Activated CD4-positive, alpha-beta T cell treated with anti-CD3 and anti-CD28 coated beads for 36 hours (primary cell): ENCODE measurements at regions of chr13 and their contacts with region 1.

Region 1: DNA sequence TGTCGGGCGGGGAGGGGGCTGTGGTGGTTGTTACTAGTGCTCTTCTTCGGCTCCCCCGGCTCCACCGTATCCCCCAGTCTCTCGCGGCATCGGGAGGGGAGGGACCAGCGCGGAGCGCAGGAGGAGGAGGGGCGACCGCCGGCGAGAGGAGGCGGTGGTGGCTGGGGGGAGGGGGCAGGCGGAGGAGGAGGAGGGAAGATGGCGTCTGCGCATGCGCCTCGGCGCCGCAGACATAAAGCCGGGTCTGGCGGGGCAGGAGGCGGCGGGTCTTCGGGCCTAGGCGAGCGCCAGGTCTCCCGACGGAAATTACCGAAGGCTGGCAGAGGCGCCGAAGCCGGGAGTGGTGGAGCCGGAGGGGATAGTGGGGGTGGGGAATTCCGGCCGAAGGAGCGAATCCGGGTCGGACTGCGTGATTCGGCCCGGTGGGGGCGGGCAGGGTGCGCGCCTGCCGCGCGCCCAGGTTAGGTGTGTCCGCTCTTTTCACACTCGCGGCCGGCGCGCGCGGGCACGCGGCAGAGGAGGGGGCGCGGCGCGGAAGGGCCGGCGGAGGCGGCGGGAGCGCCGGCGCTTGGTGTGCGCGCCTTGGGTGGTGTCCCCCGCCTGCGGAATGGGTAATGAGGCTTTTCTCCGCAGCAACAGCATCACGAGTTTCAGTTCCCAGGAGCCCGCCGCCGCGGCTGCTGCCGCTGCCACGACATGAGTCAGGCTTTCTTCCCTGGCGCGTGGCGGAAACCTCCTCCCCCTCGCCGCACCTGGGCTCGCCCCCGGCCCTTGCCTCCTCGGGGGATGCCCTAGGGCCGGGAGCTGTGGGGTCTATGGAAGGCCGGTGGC is 1.3 kb upstream of the TSC22D1 start:
- DNase-seq: peak; percentile 97
- ATAC-seq: peak; percentile 79
- H3K4me3 Mint-ChIP-seq: peak overlapping the region; percentile 88
- H3K27ac Mint-ChIP-seq: peak overlapping the region; percentile 87
- H3K4me1 Mint-ChIP-seq: peaks cover 38% of the 10 kb centered on the region
- H3K27me3 Mint-ChIP-seq: peaks cover 6% of the 10 kb centered on the region

Region 2: DNA sequence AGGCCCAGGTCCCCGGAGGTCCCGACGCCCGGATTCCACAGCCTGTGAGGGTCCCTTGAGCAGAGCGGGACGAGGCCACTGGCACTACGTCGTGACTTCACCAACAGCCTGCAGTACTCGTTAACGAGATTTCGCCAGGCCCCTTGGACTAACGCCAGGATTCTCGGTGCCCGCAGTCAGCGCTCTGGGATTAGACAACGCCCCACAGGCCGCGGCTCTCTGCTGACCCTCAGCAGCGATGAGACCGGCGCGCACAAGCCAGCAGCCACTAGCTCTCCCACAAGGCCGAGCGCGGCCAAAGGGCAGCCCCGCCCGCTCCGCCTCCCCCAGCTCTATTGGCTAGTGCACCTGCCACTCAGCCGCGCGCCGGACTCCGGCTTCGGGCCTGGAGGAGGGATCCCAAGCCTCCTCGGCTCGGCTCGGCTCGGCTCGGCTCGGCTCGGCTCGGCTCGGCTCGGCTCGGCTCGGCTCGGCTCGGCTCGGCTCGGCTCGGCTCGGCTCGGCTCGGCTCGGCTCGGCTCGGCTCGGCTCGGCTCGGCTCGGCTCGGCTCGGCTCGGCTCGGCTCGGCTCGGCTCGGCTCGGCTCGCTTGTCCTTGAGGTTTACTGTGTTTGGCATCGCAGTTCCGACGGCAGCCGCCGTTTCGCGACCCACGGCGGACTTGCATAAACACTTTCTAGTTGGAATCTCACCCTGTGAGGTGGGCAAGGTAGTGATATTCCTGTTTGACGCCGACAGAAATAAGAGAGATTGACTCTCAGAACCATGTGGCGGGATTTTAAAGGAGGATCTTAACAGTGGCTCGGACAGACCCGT is 435.5 kb before region 1 on chr13:
- CTCF ChIA-PET with region 1: no interaction called
- POLR2A ChIA-PET with region 1: no interaction called
- intact Hi-C with region 1: loop called in 1 of 2 experiments (anchors 1 kb)
- DNase-seq: peak; percentile 96
- ATAC-seq: peak; percentile 100
- H3K4me3 Mint-ChIP-seq: peak overlapping the region; percentile 87
- H3K27ac Mint-ChIP-seq: peak overlapping the region; percentile 90
- H3K4me1 Mint-ChIP-seq: peaks cover 15% of the 10 kb centered on the region
- H3K27me3 Mint-ChIP-seq: peaks cover 4% of the 10 kb centered on the region

Region 3: DNA sequence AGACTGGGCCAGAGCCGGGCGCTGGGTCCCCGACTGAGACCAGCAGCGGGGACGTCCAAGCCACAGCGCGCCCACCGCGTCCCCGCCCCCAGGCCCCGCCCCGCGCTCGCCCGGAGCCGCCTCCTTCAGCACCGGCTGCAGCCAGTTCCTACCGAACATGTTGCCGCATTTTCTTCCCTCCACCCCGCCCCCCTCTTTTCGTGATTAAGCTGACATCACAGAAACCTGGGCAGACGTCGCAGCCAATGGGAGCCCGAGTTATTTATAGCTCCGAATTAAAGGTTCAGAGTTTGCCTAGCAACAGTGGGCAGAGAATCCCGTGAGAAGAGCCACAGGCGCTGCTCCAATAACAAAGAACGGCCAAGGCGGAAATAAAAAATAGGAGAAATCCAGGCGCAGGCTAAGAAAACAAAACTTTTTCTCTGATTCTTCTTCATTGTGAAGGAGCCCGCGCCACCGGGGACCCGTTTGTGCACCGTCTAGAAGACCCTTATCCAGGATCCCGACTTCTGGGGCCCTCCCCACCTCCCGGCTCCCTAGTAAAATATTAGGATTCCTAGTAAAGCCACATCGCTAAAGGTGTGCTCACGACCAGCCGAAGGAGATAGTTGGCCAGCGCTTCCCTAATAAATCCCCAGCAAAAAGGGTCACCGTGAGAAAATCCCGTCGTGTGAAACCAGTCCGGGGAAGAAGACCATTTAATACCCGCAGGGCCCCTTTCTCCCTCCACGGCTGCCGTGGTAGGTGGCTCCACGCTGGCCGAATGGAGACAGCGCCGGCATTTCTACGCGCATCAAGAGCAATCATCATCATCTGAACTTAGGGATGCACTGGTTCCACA is 142.1 kb before region 1 on chr13:
- CTCF ChIA-PET with region 1: no interaction called
- POLR2A ChIA-PET with region 1: no interaction called
- intact Hi-C with region 1: loop called in 1 of 2 experiments (anchors 1 kb)
- DNase-seq: peak; percentile 94
- ATAC-seq: peak; percentile 84
- H3K4me3 Mint-ChIP-seq: peak overlapping the region; percentile 73
- H3K27ac Mint-ChIP-seq: peak overlapping the region; percentile 55
- H3K4me1 Mint-ChIP-seq: peaks cover 18% of the 10 kb centered on the region
- H3K27me3 Mint-ChIP-seq: peaks cover 11% of the 10 kb centered on the region

Region 4: GRCh38 chr13:44710576-44710975 is 133.1 kb after region 1 on chr13:
- CTCF ChIA-PET with region 1: no interaction called
- POLR2A ChIA-PET with region 1: no interaction called
- intact Hi-C with region 1: loop called in 1 of 2 experiments (anchors 5 kb)
- DNase-seq: peak; percentile 54
- ATAC-seq: peak; percentile 100
- H3K4me3 Mint-ChIP-seq: no peak overlapping the region
- H3K27ac Mint-ChIP-seq: no peak overlapping the region
- H3K4me1 Mint-ChIP-seq: peaks cover 13% of the 10 kb centered on the region
- H3K27me3 Mint-ChIP-seq: peaks cover 11% of the 10 kb centered on the region

Region 5: DNA sequence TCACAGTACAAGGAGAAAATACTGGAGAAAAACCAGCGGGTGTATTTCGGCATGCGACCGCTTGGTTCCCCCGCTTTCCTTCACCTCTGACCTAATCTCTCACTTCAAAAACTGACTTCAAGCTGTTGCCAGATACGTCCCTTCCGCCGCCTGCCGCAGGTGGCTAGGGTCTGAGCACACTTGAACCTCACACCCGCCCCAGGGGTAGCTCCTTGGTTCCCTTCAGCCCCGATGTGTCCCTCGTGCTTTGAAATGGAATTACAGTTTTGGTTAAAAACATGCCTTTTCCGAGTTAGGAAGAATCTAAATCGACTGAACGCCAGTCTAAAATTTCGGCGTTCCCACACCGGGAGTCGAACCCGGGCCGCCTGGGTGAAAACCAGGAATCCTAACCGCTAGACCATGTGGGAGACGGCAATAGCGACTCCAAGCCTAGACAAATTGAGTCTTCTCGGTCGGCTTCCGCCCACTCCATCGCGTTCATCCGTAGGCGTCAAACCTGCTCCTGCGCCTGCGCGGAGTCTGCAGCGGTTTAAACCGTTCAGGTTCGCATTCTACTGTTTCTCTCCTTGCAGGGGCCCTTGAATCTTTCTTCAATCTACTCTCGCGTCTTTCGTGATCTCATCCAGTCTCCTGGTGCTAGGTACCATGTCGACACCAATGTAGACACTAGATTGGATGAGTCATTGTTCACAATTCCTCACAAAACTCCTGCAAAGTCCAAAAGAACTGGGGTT is 340.3 kb after region 1 on chr13:
- CTCF ChIA-PET with region 1: no interaction called
- POLR2A ChIA-PET with region 1: no interaction called
- intact Hi-C with region 1: loop called (anchors 1 to 5 kb)
- DNase-seq: peak; percentile 96
- ATAC-seq: peak; percentile 81
- H3K4me3 Mint-ChIP-seq: no peak overlapping the region
- H3K27ac Mint-ChIP-seq: no peak overlapping the region
- H3K4me1 Mint-ChIP-seq: peaks cover 3% of the 10 kb centered on the region
- H3K27me3 Mint-ChIP-seq: no peaks in the 10 kb centered on the region

Region 6: DNA sequence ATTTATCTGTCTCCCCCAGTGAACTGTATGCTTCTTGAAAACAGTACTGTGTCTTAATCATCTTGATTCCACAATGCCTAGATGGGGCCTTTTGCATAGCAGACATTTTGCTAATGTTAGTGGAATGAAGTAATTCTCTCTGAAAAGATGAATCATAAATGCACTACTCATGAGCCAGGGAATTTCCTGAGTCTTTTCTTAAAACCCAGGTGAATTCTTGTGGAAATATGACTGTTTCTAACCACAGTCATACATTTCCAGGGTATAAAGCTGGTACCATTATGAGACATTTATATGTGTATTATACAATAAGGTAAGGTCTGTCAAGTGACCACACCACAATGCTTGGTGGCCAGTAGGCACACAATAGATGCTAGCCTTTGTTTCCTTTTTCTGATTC is 628.9 kb after region 1 on chr13:
- CTCF ChIA-PET with region 1: no interaction called
- POLR2A ChIA-PET with region 1: no interaction called
- intact Hi-C with region 1: loop called in 1 of 2 experiments (anchors 5 kb)
- DNase-seq: peak; percentile 35
- ATAC-seq: peak; percentile 94
- H3K4me3 Mint-ChIP-seq: no peak overlapping the region
- H3K27ac Mint-ChIP-seq: no peak overlapping the region
- H3K4me1 Mint-ChIP-seq: peaks cover 34% of the 10 kb centered on the region
- H3K27me3 Mint-ChIP-seq: no peaks in the 10 kb centered on the region

Region 7: DNA sequence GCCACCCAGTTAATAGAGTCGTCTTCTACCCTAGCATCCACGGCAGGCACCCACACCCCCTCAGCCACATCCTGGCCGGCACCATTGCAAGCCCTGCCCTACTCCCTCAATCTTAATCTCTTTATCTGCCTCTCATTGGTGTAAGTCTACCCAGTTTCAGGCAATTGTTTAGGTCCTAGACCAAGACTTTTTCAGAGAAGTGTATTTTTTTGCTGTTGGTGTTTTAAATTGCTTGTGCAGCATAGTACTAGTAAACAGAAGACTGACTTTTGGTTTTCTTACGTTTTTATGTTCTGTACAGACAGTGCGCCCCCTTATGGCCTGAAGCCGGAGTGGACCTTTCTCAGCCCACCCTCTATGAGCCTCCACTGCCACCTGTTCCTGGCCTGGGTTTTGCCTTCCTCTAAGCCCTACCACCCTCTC is 1606.8 kb after region 1 on chr13:
- CTCF ChIA-PET with region 1: no interaction called
- POLR2A ChIA-PET with region 1: no interaction called
- intact Hi-C with region 1: loop called in 1 of 2 experiments (anchors 5 kb)
- DNase-seq: peak; percentile 89
- ATAC-seq: peak; percentile 61
- H3K4me3 Mint-ChIP-seq: peak overlapping the region; percentile 97
- H3K27ac Mint-ChIP-seq: peak overlapping the region; percentile 98
- H3K4me1 Mint-ChIP-seq: peaks cover 35% of the 10 kb centered on the region
- H3K27me3 Mint-ChIP-seq: no peaks in the 10 kb centered on the region